Astrocyte of the cerebellum (primary cell): ENCODE measurements at regions of chr5 and their contacts with region 1.

Region 1: DNA sequence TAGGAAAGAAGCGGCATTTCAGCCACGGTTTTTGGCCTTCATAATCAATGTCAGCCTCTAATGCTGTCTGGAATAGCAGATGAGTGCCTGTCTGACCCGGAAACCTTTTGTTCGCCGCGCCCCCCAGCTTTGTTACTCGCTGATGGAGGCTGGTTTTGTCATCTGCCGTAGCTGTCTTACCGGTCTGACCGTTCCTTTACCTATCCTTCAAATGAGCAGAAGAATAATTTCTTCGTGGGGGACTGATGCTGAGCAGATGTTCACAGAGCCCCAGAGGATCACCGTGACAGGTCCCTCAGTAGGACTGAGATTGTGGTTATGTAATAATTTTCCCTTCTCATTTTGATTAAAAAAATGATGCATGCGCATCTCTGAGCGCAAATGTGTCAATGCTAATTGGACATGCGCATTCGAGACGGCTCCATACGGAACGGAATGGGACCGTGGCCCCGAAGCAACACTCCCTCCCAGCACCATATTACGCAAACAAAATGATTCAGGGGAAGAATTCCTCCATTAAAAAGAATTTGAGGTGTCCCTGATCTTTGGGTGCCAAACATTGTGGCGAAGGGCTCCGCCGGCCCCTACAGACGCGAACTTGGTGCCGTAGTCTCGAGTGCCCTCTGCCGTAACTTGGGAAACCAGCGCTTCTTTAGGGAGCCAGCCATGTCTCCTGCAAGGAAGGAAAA is 27.6 kb downstream of the TLX3 start:
- DNase-seq: peak; percentile 34
- H3K4me3 ChIP-seq: peak overlapping the region; percentile 50
- CTCF ChIP-seq: peak; percentile 84

Region 2: GRCh38 chr5:171272996-171273970 is 63.4 kb before region 1 on chr5:
- in situ Hi-C with region 1: loop called (anchors 5 kb)
- DNase-seq: no peak
- H3K4me3 ChIP-seq: no peak overlapping the region
- CTCF ChIP-seq: peak; percentile 31